A673 (cell line): ENCODE measurements at regions of chr4 and their contacts with region 1.

Region 1: GRCh38 chr4:145216535-145216934 is 36.1 kb upstream of the OTUD4 start:
- DNase-seq: peak; percentile 37
- H3K4me3 ChIP-seq: no peak overlapping the region
- H3K27ac ChIP-seq: no peak overlapping the region
- H3K4me1 ChIP-seq: no peaks in the 10 kb centered on the region
- H3K27me3 ChIP-seq: no peaks in the 10 kb centered on the region
- CTCF ChIP-seq: peak; percentile 65

Region 2: GRCh38 chr4:145061318-145061920 is 155.1 kb before region 1 on chr4:
- CTCF ChIA-PET with region 1: no interaction called
- POLR2A ChIA-PET with region 1: no interaction called
- intact Hi-C with region 1: no loop called
- DNase-seq: peak; percentile 69
- H3K4me3 ChIP-seq: no peak overlapping the region
- H3K27ac ChIP-seq: no peak overlapping the region
- H3K4me1 ChIP-seq: peaks cover 34% of the 10 kb centered on the region
- H3K27me3 ChIP-seq: no peaks in the 10 kb centered on the region
- CTCF ChIP-seq: peak; percentile 61

Region 3: DNA sequence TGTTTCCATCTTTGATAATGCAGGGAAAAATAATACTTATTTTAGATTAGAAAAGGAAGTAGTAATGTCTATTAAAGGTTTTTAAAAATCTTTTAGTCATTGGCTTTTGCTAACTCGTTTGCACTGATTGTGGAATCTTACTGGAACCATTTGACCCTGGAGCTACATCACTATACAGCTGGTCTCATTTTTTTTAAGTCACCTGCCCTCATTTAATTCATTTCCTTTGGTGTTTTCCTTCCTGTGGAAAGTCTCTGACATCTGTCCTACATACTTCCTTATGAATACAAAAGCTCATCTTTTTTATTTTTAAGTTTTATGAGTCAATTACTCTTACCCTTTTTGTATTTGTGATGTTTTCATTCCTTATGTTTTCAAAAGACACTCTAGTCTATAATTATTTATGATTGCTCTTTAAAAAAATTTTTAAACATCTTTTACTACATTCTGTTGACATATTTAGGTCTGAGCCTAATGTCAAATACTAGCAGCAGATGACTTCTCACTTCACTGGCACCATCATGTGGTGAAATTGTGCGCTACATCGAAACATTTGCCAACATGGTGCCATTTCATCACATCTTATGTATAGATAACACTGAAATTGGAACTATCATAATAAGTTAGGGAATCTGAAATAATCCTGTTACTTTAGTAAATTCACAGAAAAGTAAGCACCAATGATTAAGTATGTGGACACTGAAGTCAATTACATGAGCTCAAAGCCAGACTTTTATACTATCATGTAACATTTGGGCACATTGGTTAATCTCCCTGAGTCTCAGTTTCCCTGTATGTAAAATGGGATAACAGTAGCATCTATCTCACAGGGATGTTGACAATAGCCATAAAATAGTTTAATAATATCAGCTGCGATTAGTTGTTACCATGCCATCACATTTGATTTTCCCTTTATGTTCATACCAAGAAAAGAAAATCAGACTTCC is 393.2 kb after region 1 on chr4:
- CTCF ChIA-PET with region 1: interaction called, 8 read pairs
- POLR2A ChIA-PET with region 1: no interaction called
- intact Hi-C with region 1: loop called (anchors 1 kb)
- DNase-seq: peak; percentile 78
- H3K4me3 ChIP-seq: no peak overlapping the region
- H3K27ac ChIP-seq: no peak overlapping the region
- H3K4me1 ChIP-seq: no peaks in the 10 kb centered on the region
- H3K27me3 ChIP-seq: no peaks in the 10 kb centered on the region
- CTCF ChIP-seq: peak; percentile 88